Prostate gland (tissue), 2 donors: ENCODE measurements at regions of chr1 and their contacts with region 1.

Region 1: DNA sequence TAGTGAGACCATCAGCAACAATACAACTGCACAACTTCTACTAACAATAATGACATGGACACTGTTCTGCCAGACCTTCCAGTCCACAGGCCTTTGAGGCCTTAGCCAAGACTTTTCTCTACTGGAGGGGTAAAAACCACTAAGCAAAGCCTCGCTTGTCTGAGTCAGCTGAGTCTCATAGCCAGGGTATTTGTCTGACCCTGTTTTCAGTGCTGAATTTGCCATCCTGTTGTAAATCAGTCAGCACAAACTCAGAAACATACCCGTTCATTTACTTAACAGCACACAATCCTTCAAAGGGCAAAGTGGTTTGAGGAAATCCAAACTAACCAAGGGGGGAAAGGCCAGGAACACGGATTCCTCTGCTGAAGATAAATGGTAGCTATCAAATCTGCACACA is 537.8 kb downstream of the SMYD3 start:
- DNase-seq: no peak
- H3K4me3 ChIP-seq: no peak overlapping the region
- H3K27ac ChIP-seq: peak overlapping the region in 1 of 2 donors; percentile 41
- H3K4me1 ChIP-seq: no peaks in the 10 kb centered on the region
- H3K27me3 ChIP-seq: no peaks in the 10 kb centered on the region
- CTCF ChIP-seq: no peak
- POLR2A ChIP-seq: no peak

Region 2: DNA sequence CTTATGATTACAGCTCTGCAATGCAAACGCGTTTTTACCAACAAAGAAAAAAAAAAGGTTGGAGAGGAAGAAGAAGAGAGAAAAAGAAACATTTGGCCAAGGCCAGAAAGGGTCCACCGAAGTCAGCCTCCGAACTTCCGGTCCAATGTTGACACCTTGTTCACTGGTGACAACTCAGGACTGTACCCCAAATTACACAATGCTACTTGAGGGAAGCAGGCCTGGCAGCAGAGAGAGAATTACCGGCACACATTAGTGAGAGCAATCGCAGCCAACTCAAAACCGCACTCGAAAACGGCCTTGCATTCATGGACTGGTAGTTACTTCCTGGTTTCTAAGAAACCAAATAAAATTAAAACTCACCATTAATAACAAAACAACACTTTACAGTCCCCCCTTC is 162.0 kb before region 1 on chr1:
- intact Hi-C with region 1: loop called (anchors 10 kb)
- DNase-seq: no peak
- H3K4me3 ChIP-seq: no peak overlapping the region
- H3K27ac ChIP-seq: no peak overlapping the region
- H3K4me1 ChIP-seq: no peaks in the 10 kb centered on the region
- H3K27me3 ChIP-seq: no peaks in the 10 kb centered on the region
- CTCF ChIP-seq: no peak
- POLR2A ChIP-seq: no peak

Region 3: DNA sequence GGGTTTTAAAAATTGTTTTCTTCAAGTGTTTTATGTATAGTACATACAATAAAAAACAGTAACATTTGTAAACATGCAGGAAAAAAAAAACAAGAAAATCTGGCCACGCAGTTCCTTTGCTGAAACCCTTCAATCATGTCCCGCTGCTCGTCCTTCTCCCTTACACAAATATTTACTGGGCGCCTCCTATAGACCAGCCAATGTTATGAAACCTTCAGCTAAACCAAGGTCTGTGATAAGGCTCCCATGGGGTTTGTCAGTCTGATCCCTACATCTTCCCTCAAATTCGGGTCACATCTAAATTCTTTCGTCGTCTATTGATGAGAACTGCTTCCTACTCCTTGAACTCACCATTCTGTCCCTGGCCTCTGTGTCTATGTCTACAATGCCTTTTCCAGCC is 46.1 kb before region 1 on chr1:
- intact Hi-C with region 1: no loop called
- DNase-seq: no peak
- H3K4me3 ChIP-seq: no peak overlapping the region
- H3K27ac ChIP-seq: no peak overlapping the region
- H3K4me1 ChIP-seq: no peaks in the 10 kb centered on the region
- H3K27me3 ChIP-seq: no peaks in the 10 kb centered on the region
- CTCF ChIP-seq: no peak
- POLR2A ChIP-seq: no peak